Ascending aorta (tissue), 2 donors: ENCODE measurements at regions of chr11 and their contacts with region 1.

Region 1: GRCh38 chr11:36509694-36510566 is at the start of gene TRAF6:
- DNase-seq: peak; percentile 41 to 93
- H3K4me3 ChIP-seq: peak within 1 kb of the TSS; percentile 87 to 92
- H3K27ac ChIP-seq: peak within 1 kb of the TSS; percentile 86 to 91
- H3K4me1 ChIP-seq: peaks cover 0 to 3% of the 10 kb centered on the region in 2 donors
- H3K27me3 ChIP-seq: no peaks in the 10 kb centered on the region
- CTCF ChIP-seq: peak; percentile 85 to 90 (median 88)
- total RNA-seq, gene TRAF6: 4.8 TPM

Region 2: GRCh38 chr11:36167073-36167472 is 342.9 kb before region 1 on chr11:
- intact Hi-C with region 1: no loop called
- DNase-seq: no peak
- H3K4me3 ChIP-seq: no peak overlapping the region
- H3K27ac ChIP-seq: no peak overlapping the region
- H3K4me1 ChIP-seq: no peaks in the 10 kb centered on the region
- H3K27me3 ChIP-seq: no peaks in the 10 kb centered on the region
- CTCF ChIP-seq: no peak

Region 3: GRCh38 chr11:36594316-36594989 is 84.5 kb after region 1 on chr11 and contains the start of gene IFTAP:
- intact Hi-C with region 1: loop called (anchors 5 kb)
- DNase-seq: peak in 1 of 2 donors; percentile 79
- H3K4me3 ChIP-seq: peak within 1 kb of the TSS; percentile 87 to 88
- H3K27ac ChIP-seq: peak within 1 kb of the TSS; percentile 55 to 59
- H3K4me1 ChIP-seq: peaks cover 0 to 6% of the 10 kb centered on the region in 2 donors
- H3K27me3 ChIP-seq: no peaks in the 10 kb centered on the region
- CTCF ChIP-seq: no peak
- total RNA-seq, gene IFTAP: 7.1 TPM